ENCODE measurements at regions of chr2 and their contacts with region 1.

Region 1: DNA sequence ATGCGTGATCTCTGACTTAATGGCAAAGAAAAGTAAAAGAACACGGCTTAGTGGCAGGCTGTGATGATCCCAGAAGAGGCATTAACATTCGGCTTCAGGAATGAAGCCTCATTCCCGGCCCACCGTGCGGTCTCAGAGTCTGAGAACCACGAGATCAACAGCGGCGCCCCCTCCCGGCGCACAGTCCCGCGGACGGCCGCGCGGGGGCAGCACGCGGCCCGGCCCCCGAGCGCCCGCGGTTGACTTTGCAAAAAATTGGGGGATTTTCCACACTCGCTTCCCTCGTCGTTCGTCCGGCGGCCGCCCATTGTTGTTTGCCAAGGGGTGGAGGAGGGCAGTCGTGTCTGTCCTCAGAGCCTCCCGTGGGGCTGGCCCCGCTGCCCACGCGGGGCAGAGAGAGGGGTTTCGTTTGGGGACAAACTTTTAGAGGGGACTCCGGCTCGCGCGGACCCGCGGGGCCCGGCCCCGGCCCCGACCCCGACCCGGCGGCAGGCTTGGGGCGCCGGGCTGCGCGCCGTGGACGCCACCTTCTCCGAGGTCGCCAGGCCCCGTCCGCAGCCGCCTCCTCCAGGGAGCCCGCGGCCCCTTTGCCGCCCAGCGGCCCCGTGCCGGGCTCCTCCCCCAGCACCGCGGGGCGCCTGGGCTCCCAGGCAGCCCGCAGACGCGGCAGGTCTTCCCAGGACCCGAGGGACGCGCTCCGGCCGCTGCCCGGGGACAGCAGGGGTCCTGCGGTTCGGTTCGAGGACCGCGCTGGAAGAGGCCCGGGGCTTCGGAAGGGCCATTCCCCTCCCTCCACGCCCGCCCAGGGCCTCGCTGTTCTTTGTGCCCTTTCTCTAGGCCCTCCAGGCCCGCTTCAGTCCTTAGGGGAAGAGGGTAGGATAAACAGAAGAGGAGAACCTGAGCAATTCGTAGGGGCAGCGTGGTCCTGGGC is 3.4 kb upstream of the HS6ST1 start:
- DNase-seq: peak; percentile 72 to 82
- ATAC-seq: peak; percentile 70 to 75
- H3K4me3 ChIP-seq: peak overlapping the region; percentile 64 to 80 (median 78)
- H3K27ac ChIP-seq: peak overlapping the region; percentile 85 to 95 (median 88)
- H3K4me1 ChIP-seq: peaks cover 14 to 32% of the 10 kb centered on the region in 2 donors
- H3K27me3 ChIP-seq: no peaks in the 10 kb centered on the region
- CTCF ChIP-seq: peak; percentile 80 to 99 (median 94)
- POLR2A ChIP-seq: peak; percentile 42 to 60

Region 2: GRCh38 chr2:127884436-127885345 is 437.4 kb before region 1 on chr2:
- in situ Hi-C with region 1: no loop called
- intact Hi-C with region 1: loop called (anchors 10 kb)
- DNase-seq: no peak
- ATAC-seq: no peak
- H3K4me3 ChIP-seq: peak overlapping the region; percentile 57 to 86 (median 68)
- H3K27ac ChIP-seq: peak overlapping the region; percentile 89 to 96 (median 92)
- H3K4me1 ChIP-seq: peaks cover 35 to 43% of the 10 kb centered on the region in 2 donors
- H3K27me3 ChIP-seq: no peaks in the 10 kb centered on the region
- CTCF ChIP-seq: no peak
- POLR2A ChIP-seq: no peak

Region 3: GRCh38 chr2:128178650-128179460 is 143.2 kb before region 1 on chr2:
- in situ Hi-C with region 1: no loop called
- intact Hi-C with region 1: loop called (anchors 5 kb)
- DNase-seq: peak; percentile 26 to 56
- ATAC-seq: peak; percentile 85 to 88
- H3K4me3 ChIP-seq: no peak overlapping the region
- H3K27ac ChIP-seq: peak overlapping the region in 2 of 4 donors; percentile 21 to 43
- H3K4me1 ChIP-seq: peaks cover 6 to 7% of the 10 kb centered on the region in 2 donors
- H3K27me3 ChIP-seq: no peaks in the 10 kb centered on the region
- CTCF ChIP-seq: peak; percentile 72 to 80 (median 79)
- POLR2A ChIP-seq: no peak

Region 4: GRCh38 chr2:128469203-128469602 is 147.2 kb after region 1 on chr2:
- in situ Hi-C with region 1: no loop called
- intact Hi-C with region 1: loop called (anchors 10 kb)
- DNase-seq: no peak
- ATAC-seq: no peak
- H3K4me3 ChIP-seq: no peak overlapping the region
- H3K27ac ChIP-seq: no peak overlapping the region
- H3K4me1 ChIP-seq: no peaks in the 10 kb centered on the region
- H3K27me3 ChIP-seq: peaks cover 0 to 2% (median 0%) of the 10 kb centered on the region in 3 donors
- CTCF ChIP-seq: peak in 1 of 5 experiments; percentile 10
- POLR2A ChIP-seq: no peak

Region 5: DNA sequence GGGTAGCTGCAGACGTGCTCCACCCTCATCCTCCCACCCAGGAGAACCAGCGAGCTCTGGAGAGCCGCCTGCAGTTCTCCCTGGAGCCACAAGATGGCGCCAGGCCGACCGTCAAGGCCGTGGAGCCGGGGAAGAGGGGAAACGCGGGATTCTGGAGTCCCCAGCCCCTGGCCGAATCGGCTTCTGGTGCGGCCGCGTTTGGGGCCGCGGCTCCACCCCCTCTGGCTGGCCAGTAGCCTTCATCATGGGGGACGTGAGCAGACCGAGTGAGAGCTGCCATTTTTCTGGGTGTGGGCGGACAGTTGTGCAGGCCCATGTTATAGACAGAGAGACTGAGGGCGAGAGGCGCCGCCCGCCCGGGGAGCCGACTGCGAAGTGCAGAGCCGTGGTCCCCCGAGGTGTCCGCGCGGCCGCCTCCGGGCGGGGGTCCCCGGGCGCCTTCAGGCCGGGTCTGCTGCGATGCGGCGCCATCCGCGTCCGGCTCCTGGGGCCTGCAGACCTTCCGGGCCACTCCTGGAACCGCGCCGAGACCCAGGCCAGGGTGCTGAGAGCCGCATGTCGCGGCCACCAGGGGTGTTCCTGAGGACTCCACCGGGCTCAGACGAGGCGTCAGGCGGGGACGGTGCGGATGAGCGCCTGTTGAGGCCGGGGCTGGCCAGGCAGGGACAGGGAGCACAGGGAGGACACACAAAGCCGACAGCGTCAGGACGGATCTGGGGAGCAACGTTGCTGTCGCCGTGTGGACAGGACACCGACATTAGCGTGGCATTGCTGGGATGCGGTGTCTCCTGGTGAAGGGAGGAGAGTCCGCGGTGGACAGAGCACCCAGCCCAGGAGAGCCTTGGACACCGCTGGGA is 414.9 kb after region 1 on chr2:
- in situ Hi-C with region 1: loop called in 1 of 4 experiments (anchors 25 kb)
- intact Hi-C with region 1: no loop called
- DNase-seq: peak; percentile 41 to 57
- ATAC-seq: peak; percentile 65 to 75
- H3K4me3 ChIP-seq: peak overlapping the region; percentile 26 to 52 (median 46)
- H3K27ac ChIP-seq: no peak overlapping the region
- H3K4me1 ChIP-seq: peaks cover 8 to 11% of the 10 kb centered on the region in 2 donors
- H3K27me3 ChIP-seq: no peaks in the 10 kb centered on the region
- CTCF ChIP-seq: peak; percentile 83 to 98 (median 87)
- POLR2A ChIP-seq: no peak

Region 6: DNA sequence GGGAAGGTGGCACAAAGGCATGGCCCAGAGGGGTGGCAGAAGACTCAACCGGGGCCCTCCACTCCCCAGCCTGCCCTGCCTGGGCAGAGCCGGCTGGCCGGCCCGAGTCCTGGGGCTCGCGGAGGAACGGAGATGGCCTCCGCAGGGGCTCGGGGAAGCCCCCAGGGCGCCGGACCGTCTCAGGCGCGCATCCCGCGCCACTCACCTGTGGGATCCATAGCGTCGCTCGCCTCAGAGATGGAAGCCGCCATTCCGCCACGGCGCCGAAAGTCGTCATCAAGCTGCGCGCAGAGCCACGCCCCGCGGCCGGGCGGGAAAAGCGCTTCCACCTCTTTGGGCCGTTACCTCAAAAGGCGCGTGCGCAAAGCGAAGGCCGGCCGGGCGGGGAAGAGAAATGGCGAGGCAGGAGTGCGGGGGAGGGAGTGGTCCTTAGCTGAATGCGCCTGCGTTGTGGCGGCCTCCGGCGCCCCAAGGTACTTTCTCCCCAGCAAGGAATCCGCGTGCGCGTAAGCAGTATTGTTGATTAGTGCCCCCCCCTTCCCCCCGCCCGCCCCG is 1859.4 kb after region 1 on chr2 and contains the start of gene SMPD4:
- in situ Hi-C with region 1: no loop called
- intact Hi-C with region 1: loop called (anchors 10 kb)
- DNase-seq: peak; percentile 91 to 94
- ATAC-seq: peak; percentile 94 to 95
- H3K4me3 ChIP-seq: peak within 1 kb of the TSS; percentile 88 to 99 (median 93)
- H3K27ac ChIP-seq: peak within 1 kb of the TSS; percentile 88 to 93 (median 91)
- H3K4me1 ChIP-seq: peaks cover 5 to 11% of the 10 kb centered on the region in 2 donors
- H3K27me3 ChIP-seq: no peaks in the 10 kb centered on the region
- CTCF ChIP-seq: no peak
- POLR2A ChIP-seq: no peak
- total RNA-seq, gene SMPD4: 19.5 to 33.4 (median 24.5) TPM